Naive thymus-derived CD4-positive, alpha-beta T cell (primary cell): ENCODE measurements at regions of chr1 and their contacts with region 1.

Region 1: GRCh38 chr1:234499119-234499942 is 20.4 kb upstream of the TARBP1 start:
- DNase-seq: peak; percentile 65 to 85 (median 78)
- ATAC-seq: peak; percentile 96
- H3K4me3 ChIP-seq: no peak overlapping the region
- H3K4me3 Mint-ChIP-seq: peak overlapping the region in 2 of 10 donors; percentile 33 to 62
- H3K27ac ChIP-seq: no peak overlapping the region
- H3K27ac Mint-ChIP-seq: peak overlapping the region in 4 of 9 donors; percentile 34 to 82 (median 74)
- H3K4me1 ChIP-seq: peaks cover 0 to 4% of the 10 kb centered on the region in 2 donors
- H3K4me1 Mint-ChIP-seq: peaks cover 0 to 62% (median 6%) of the 10 kb centered on the region in 7 donors
- H3K27me3 ChIP-seq: no peaks in the 10 kb centered on the region
- H3K27me3 Mint-ChIP-seq: no peaks in the 10 kb centered on the region

Region 2: DNA sequence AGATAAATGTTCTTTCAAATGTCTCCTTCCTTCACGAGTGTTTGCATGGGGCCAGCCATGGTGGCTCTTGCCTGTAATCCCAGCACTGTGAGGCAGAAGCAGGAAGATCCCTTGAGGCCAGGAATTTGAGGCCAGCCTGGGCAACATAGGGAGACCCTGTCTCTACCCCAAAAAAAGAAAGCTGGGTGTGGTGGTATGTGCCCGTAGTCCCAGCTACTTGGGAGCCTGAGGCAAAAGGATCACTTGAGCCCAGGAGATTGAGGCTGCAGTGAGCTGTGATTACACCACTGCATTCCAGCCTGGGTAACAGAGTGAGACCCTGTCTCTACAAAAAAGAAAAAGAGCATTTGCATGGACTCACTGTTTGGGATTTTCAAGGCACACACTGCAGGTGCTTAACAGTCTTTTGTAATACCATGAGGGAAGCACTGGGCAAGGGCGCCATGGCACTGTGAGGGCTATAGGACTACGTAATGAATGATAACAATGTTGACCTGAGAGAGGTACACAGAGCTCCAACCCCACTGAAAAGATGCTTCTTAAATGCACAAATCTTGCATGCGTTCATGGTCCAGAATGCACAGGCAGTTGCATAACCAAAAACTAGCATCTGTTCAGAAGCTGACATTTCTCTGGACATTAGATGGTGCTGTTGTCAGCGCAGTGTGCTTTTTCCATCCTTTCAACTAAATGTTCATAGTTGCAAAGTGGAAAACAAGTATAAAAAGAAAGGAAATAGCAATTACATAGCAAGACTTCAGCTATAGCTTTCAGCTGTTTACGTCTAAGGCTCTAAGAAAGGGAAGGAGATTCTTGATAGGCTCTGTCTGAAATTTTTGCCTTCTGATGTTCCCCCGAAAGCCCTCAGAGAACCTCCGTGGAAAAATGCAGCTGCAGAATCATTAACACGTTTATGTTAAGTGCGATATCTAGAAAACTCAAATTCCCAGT is 12.6 kb before region 1 on chr1:
- CTCF ChIA-PET with region 1: interaction called, 7 read pairs
- POLR2A ChIA-PET with region 1: interaction called, 3 read pairs
- intact Hi-C with region 1: loop called in 1 of 2 experiments (anchors 1 kb)
- DNase-seq: peak in 6 of 9 donors; percentile 17 to 60 (median 44)
- ATAC-seq: peak; percentile 80
- H3K4me3 ChIP-seq: no peak overlapping the region
- H3K4me3 Mint-ChIP-seq: peak overlapping the region in 9 of 10 donors; percentile 10 to 74 (median 57)
- H3K27ac ChIP-seq: no peak overlapping the region
- H3K27ac Mint-ChIP-seq: peak overlapping the region; percentile 18 to 85 (median 79)
- H3K4me1 ChIP-seq: peaks cover 0 to 20% of the 10 kb centered on the region in 2 donors
- H3K4me1 Mint-ChIP-seq: peaks cover 20 to 42% (median 35%) of the 10 kb centered on the region in 7 donors
- H3K27me3 ChIP-seq: no peaks in the 10 kb centered on the region
- H3K27me3 Mint-ChIP-seq: peaks cover 0 to 22% (median 6%) of the 10 kb centered on the region in 5 donors

Region 3: GRCh38 chr1:234573711-234574299 is 74.5 kb after region 1 on chr1:
- CTCF ChIA-PET with region 1: no interaction called
- POLR2A ChIA-PET with region 1: no interaction called
- intact Hi-C with region 1: no loop called
- DNase-seq: peak in 4 of 9 donors; percentile 8 to 13 (median 11)
- ATAC-seq: no peak
- H3K4me3 ChIP-seq: no peak overlapping the region
- H3K4me3 Mint-ChIP-seq: no peak overlapping the region
- H3K27ac ChIP-seq: no peak overlapping the region
- H3K27ac Mint-ChIP-seq: peak overlapping the region in 1 of 9 donors; percentile 16
- H3K4me1 ChIP-seq: no peaks in the 10 kb centered on the region
- H3K4me1 Mint-ChIP-seq: peaks cover 0 to 9% (median 5%) of the 10 kb centered on the region in 7 donors
- H3K27me3 ChIP-seq: no peaks in the 10 kb centered on the region
- H3K27me3 Mint-ChIP-seq: peaks cover 0 to 6% (median 0%) of the 10 kb centered on the region in 5 donors

Region 4: DNA sequence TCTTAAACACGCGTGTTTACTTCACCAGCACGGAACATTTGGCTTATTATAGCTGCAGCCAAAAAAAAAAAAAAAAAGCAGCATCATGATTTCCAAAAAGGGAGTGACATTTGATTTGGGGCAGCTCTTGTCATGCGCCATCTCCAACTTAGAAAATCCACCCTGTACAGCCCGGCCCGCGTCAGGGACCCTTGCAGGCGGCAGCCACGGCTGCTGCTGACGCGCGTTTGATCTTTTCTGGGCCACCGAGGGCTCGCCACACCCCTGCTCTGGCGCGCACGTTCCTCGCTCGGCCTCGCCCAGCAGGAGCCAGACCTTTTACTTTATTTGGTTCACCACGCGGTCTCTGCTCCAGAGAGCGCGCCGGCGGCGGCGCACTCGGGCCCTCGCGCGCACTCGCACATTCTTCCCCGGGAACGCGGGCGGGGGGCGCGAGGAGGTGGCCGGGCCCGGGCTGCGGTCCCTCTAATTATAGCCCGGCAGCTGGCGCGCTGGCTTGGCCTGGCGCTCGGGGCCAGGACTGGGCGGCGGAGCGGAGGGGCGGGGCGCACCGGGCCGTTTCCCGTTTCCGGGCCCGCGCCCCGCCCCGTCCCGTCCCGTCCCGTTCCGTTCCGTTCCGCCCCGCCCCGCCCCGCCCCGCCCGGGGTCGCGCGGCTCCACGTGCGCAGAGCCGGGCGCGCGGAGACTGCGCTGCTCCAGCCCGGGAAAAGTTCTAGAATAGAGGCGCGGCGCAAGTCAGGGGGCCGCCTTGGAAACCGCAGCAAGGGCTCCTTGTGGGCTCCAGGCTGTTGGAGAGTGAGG is 100.5 kb after region 1 on chr1:
- CTCF ChIA-PET with region 1: interaction called, 7 read pairs
- POLR2A ChIA-PET with region 1: interaction called, 3 read pairs
- intact Hi-C with region 1: loop called (anchors 1 kb)
- DNase-seq: peak; percentile 52 to 88 (median 62)
- ATAC-seq: peak; percentile 74
- H3K4me3 ChIP-seq: peak overlapping the region; percentile 61
- H3K4me3 Mint-ChIP-seq: peak overlapping the region; percentile 75 to 97 (median 89)
- H3K27ac ChIP-seq: peak overlapping the region; percentile 96
- H3K27ac Mint-ChIP-seq: peak overlapping the region; percentile 87 to 99 (median 95)
- H3K4me1 ChIP-seq: peaks cover 51 to 54% of the 10 kb centered on the region in 2 donors
- H3K4me1 Mint-ChIP-seq: peaks cover 24 to 68% (median 56%) of the 10 kb centered on the region in 7 donors
- H3K27me3 ChIP-seq: no peaks in the 10 kb centered on the region
- H3K27me3 Mint-ChIP-seq: no peaks in the 10 kb centered on the region

Region 5: DNA sequence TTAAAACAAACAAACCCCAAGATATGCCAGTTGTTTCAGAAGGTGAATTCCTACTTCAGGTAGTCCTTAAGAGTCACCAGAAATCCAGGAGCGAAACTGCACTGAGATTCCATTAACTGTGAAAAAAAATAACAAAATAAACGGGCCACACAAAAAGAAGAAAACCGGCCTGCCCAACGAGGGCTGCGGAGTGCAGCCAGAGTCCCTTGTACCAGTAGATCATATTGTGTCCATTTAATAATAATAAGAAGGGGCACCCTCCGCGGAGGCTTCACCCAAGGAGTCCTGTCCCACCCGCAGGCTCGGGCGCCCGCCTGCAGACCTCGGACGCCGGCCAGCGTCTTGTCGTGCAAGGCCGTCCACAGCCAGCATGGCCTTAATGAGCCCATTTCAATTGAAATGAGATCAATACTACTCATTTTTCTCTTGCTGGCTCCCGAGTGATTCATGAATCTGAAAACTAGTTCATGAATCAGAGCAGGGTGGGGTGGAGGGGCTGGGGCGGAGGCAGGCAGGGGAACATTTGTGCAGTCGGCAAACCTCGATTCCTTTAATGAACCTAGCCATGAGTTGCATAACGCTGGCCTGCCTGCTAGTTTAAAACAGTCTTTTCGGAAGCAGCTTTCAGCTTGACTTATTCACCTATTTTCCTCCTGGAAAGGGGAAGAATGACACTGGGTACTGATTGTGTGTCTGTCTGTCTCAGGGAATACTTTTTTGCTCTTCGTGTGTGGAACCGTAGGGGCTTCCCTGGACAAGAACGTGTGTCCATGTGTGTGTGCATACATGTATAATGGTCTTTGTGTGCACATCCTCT is 223.8 kb after region 1 on chr1:
- CTCF ChIA-PET with region 1: no interaction called
- POLR2A ChIA-PET with region 1: no interaction called
- intact Hi-C with region 1: loop called in 1 of 2 experiments (anchors 5 kb)
- DNase-seq: peak in 2 of 9 donors; percentile 51 to 68
- ATAC-seq: peak; percentile 12
- H3K4me3 ChIP-seq: peak overlapping the region; percentile 52
- H3K4me3 Mint-ChIP-seq: peak overlapping the region; percentile 51 to 85 (median 82)
- H3K27ac ChIP-seq: peak overlapping the region; percentile 95
- H3K27ac Mint-ChIP-seq: peak overlapping the region; percentile 87 to 99 (median 98)
- H3K4me1 ChIP-seq: peaks cover 39 to 46% of the 10 kb centered on the region in 2 donors
- H3K4me1 Mint-ChIP-seq: peaks cover 46 to 95% (median 84%) of the 10 kb centered on the region in 7 donors
- H3K27me3 ChIP-seq: no peaks in the 10 kb centered on the region
- H3K27me3 Mint-ChIP-seq: no peaks in the 10 kb centered on the region

Region 6: GRCh38 chr1:234737967-234738314 is 238.6 kb after region 1 on chr1:
- CTCF ChIA-PET with region 1: no interaction called
- POLR2A ChIA-PET with region 1: no interaction called
- intact Hi-C with region 1: no loop called
- DNase-seq: no peak
- ATAC-seq: no peak
- H3K4me3 ChIP-seq: no peak overlapping the region
- H3K4me3 Mint-ChIP-seq: no peak overlapping the region
- H3K27ac ChIP-seq: no peak overlapping the region
- H3K27ac Mint-ChIP-seq: peak overlapping the region in 1 of 9 donors; percentile 6
- H3K4me1 ChIP-seq: no peaks in the 10 kb centered on the region
- H3K4me1 Mint-ChIP-seq: peaks cover under 1 to 34% (median 7%) of the 10 kb centered on the region in 7 donors
- H3K27me3 ChIP-seq: no peaks in the 10 kb centered on the region
- H3K27me3 Mint-ChIP-seq: no peaks in the 10 kb centered on the region

Region 7: GRCh38 chr1:234842726-234843641 is 343.7 kb after region 1 on chr1:
- CTCF ChIA-PET with region 1: no interaction called
- POLR2A ChIA-PET with region 1: no interaction called
- intact Hi-C with region 1: loop called in 1 of 2 experiments (anchors 5 kb)
- DNase-seq: peak in 8 of 9 donors; percentile 7 to 81 (median 30)
- ATAC-seq: peak; percentile 26
- H3K4me3 ChIP-seq: peak overlapping the region; percentile 5
- H3K4me3 Mint-ChIP-seq: peak overlapping the region; percentile 30 to 77 (median 62)
- H3K27ac ChIP-seq: peak overlapping the region; percentile 15
- H3K27ac Mint-ChIP-seq: peak overlapping the region; percentile 30 to 90 (median 77)
- H3K4me1 ChIP-seq: peaks cover 36 to 57% of the 10 kb centered on the region in 2 donors
- H3K4me1 Mint-ChIP-seq: peaks cover 44 to 89% (median 74%) of the 10 kb centered on the region in 7 donors
- H3K27me3 ChIP-seq: no peaks in the 10 kb centered on the region
- H3K27me3 Mint-ChIP-seq: no peaks in the 10 kb centered on the region

Region 8: DNA sequence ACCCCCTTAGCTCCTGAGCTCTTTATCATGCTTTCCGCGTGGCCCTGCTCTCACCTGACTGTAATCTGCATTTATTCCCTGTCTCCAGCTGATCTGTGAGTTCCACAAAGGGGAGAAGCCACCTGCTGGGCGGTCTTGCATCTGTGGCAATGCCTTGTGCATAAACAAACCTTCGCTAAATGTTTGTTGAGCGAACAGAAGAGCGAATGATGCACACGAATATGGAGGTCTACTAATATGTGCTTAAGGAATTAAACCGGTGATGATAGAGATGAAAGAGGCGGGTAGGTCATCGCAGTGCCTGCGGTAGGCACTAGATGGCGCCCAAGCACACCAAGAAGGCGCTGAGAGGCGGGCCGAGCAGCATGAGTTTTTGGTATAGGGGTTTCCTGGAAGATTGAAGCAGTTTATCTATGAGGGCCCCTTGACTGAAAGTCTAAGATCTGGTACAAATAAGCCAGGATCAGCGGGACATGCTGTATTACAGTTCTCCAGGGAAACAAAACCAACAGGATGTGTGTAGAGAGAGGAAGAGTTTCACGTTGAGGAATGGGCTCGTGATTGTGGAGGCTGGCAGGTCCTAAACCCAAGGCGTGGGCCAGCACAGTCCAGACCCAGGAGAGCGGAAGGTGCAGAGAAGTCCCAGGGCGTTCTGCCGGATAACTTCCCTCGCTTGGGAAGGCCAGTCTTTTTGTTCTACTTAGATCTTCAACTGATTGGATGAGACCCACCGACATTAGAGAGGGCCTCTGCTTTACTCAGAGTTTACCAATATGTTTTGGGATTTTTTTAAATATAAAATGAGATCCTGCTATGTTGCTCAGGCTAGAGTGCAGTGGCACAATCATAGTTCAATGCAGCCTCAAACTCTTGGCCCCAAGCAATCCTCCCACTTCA is 594.6 kb after region 1 on chr1:
- CTCF ChIA-PET with region 1: no interaction called
- POLR2A ChIA-PET with region 1: no interaction called
- intact Hi-C with region 1: loop called in 1 of 2 experiments (anchors 1 kb)
- DNase-seq: peak; percentile 67 to 89 (median 80)
- ATAC-seq: peak; percentile 97
- H3K4me3 ChIP-seq: no peak overlapping the region
- H3K4me3 Mint-ChIP-seq: peak overlapping the region in 1 of 10 donors; percentile 41
- H3K27ac ChIP-seq: no peak overlapping the region
- H3K27ac Mint-ChIP-seq: peak overlapping the region in 3 of 9 donors; percentile 49 to 88 (median 50)
- H3K4me1 ChIP-seq: peaks cover 0 to 3% of the 10 kb centered on the region in 2 donors
- H3K4me1 Mint-ChIP-seq: peaks cover 6 to 14% (median 7%) of the 10 kb centered on the region in 7 donors
- H3K27me3 ChIP-seq: no peaks in the 10 kb centered on the region
- H3K27me3 Mint-ChIP-seq: peaks cover 0 to 6% (median 0%) of the 10 kb centered on the region in 5 donors

Region 9: GRCh38 chr1:235783148-235783776 is 1283.9 kb after region 1 on chr1:
- CTCF ChIA-PET with region 1: no interaction called
- POLR2A ChIA-PET with region 1: no interaction called
- intact Hi-C with region 1: loop called in 1 of 2 experiments (anchors 10 kb)
- DNase-seq: peak in 5 of 9 donors; percentile 1 to 20 (median 4)
- ATAC-seq: no peak
- H3K4me3 ChIP-seq: no peak overlapping the region
- H3K4me3 Mint-ChIP-seq: no peak overlapping the region
- H3K27ac ChIP-seq: no peak overlapping the region
- H3K27ac Mint-ChIP-seq: no peak overlapping the region
- H3K4me1 ChIP-seq: no peaks in the 10 kb centered on the region
- H3K4me1 Mint-ChIP-seq: no peaks in the 10 kb centered on the region
- H3K27me3 ChIP-seq: no peaks in the 10 kb centered on the region
- H3K27me3 Mint-ChIP-seq: no peaks in the 10 kb centered on the region